Activated CD4-positive, alpha-beta T cell treated with anti-CD3 and anti-CD28 coated beads, Interleukin-2, amount 10 ng/mL, durations not matched to agents 7 days and 5 days (primary cell): ENCODE measurements at regions of chr2 and their contacts with region 1.

Region 1: DNA sequence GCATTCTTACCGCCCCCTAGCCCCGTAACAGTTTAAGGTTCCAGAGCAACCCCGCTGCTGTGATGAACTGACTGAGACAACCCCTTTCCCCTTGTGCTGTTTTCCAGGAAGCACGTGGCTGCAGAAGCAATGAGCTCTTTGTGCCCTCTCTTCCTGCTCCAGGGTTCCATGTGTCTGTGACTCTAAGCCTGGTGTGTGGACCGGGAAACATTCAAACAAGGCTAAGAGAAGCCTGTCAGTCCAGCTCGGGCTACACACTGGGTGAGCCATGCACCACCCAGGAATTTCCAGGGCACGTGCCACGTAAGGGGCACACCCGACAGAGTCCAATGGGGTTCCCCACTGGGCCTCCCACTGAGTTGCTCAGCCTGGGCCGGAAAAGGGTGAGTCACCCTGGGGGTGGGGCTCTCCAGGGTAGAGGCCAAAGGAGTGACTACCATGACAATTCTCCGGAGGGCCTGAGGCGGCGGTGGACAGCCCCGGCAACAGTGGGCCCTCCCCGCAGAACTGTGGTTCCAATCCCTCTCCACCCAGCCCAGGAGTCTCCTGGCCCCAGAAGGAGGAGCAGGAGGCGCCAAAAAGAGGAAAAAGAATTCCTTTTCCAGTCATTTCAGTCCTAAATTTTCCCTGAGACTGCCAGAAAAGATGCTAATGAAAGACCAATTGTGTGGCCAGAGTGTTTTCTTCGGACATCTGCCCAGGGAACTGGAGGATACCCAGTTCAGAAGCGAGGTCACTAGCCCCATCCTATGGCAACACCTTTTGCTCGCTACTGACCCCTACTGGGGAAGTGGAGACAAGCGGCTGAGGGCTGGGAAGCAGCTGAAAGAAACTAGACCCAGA is 157.8 kb upstream of the SLC1A4 start:
- DNase-seq: peak; percentile 85
- H3K4me3 Mint-ChIP-seq: no peak overlapping the region
- H3K27ac Mint-ChIP-seq: peak overlapping the region; percentile 20
- H3K4me1 Mint-ChIP-seq: peaks cover 16% of the 10 kb centered on the region
- H3K27me3 Mint-ChIP-seq: peaks cover 16% of the 10 kb centered on the region

Region 2: GRCh38 chr2:64644177-64645004 is 187.0 kb before region 1 on chr2:
- CTCF ChIA-PET with region 1: interaction called, 15 read pairs
- POLR2A ChIA-PET with region 1: no interaction called
- DNase-seq: peak; percentile 74
- H3K4me3 Mint-ChIP-seq: peak overlapping the region; percentile 79
- H3K27ac Mint-ChIP-seq: peak overlapping the region; percentile 93
- H3K4me1 Mint-ChIP-seq: peaks cover 79% of the 10 kb centered on the region
- H3K27me3 Mint-ChIP-seq: no peaks in the 10 kb centered on the region

Region 3: DNA sequence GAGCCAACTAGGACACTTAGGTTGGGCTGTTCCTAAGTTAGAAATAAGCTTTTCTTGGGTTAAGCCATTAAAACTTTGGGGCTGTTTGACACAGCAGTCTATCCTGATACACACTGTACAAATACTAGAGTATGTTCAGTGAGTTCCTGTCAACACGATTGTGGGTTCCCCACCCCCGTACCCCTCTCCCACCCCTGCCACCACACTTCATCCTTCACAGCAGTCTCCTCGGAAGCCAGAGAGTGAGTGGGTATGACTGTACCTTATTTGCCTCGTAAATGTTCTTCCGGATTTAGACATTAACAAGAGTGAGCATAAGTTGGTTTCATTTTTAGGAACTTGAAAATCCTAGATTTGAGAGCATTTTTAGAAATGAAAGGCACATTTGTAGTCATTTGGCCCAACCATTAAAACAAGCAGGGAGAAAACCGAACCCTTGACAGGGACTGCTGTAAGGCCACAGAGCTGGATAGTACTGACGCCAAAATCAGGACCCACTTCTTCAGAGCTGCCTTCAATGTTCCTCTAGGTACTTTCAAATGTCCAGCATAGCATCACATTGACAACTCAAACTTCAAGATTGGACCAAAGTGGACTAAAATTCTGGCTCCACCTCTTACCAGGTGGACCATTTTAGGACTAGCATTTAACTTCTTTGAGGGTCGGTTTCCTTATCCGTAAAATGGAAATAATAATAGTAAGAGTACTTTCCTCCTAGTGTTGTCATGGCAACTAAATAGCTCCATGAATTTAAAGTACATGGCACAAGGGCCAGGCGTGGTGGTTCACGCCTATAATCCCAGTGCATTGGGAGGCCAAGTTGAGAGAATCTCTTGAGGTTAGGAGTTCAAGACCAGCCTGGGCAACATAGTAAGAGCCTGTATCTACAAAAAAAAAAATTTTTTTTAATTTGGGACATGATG is 11.3 kb before region 1 on chr2:
- CTCF ChIA-PET with region 1: interaction called, 24 read pairs
- POLR2A ChIA-PET with region 1: interaction called, 3 read pairs
- DNase-seq: peak; percentile 55
- H3K4me3 Mint-ChIP-seq: peak overlapping the region; percentile 47
- H3K27ac Mint-ChIP-seq: peak overlapping the region; percentile 89
- H3K4me1 Mint-ChIP-seq: peaks cover 20% of the 10 kb centered on the region
- H3K27me3 Mint-ChIP-seq: no peaks in the 10 kb centered on the region

Region 4: DNA sequence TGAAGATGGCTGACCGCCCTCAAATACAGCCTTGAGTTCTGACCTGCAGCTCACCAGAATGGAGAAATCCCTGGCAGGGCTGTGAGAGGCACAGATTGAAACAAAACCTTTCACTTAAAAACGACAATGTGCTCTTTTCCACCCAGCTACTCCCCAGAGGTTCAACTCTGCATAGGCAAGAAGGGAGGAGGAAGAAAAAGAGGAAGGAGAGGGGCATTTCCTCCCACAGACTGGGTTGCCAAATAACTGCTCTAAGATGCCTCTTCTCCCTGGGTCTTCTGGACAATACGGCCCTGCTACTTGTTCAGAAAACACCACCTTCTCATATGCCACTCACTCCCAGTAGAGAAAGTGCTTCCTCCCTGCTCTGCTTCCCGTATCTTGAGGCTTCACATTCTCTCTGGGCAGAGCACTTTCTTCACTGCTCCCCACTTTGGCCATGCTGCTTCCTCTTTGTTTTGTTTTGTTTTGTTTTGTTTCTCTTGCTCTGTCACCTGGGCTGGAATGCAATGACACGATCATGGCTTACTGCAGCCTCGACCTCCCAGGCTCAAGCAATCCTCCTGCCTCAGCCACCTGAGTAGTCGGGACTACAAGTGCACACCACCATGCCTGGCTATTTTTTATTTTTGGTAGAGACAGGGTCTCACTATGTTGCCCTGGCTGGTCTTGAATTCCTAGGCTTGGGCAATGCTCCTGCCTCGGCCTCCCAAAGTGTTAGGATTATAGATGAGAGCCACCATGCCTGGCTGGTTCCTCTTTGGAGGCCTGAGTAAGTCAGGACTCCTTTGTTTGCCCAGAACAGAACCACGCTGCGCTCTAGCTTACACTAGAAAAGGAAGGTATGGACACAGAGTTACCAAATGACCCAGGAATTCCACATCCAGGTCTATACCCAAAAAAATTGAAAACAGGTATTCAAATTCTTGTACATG is 21.7 kb after region 1 on chr2:
- CTCF ChIA-PET with region 1: interaction called, 12 read pairs
- POLR2A ChIA-PET with region 1: no interaction called
- DNase-seq: no peak
- H3K4me3 Mint-ChIP-seq: no peak overlapping the region
- H3K27ac Mint-ChIP-seq: no peak overlapping the region
- H3K4me1 Mint-ChIP-seq: peaks cover 18% of the 10 kb centered on the region
- H3K27me3 Mint-ChIP-seq: peaks cover 2% of the 10 kb centered on the region